Prostate gland (tissue), 2 donors: ENCODE measurements at regions of chr7 and their contacts with region 1.

Region 1: DNA sequence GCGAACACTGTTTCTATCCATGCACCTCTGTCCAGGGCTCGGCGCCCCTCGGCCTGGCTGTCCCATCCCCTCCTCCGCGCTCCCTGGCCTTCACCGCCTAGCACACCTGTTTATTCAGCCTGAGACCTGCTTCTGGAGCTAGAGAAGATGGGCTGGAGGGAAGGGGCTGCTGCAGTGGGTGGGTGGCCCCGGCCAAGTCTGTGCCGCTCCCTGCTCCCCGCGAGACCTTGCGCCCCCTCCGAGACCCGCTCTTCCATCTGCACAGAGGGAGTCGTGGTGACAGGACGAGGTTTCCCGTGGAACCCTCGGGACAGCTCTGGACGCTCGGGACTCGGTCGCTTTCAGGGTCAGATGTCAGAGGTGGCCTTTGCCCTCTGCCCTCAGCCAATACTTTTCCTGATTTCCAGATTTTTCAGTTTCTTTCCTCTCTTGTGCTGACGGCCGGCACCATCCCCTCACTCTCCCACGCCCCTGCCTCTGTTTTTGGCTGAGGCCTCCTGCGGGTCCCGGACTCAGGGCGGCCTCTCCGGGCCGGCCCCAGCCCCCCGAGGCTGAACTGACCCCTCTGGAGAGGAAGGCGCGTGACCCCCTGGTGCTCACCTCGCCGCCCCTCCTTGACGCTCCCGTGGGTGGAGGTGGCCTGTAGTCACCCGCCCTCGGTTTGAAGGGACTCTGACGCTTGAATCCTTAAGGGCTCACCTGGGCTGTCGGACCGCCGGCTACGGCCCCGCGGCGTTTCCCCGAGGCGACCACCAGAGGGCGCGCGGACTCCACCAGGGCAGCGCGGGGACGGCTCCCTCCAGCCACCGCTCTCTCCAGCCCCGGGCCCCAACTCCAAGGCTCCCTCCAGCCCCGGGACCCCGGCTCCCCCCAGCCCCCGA is 15.6 kb downstream of the SHH start:
- DNase-seq: peak; percentile 60
- H3K4me3 ChIP-seq: no peak overlapping the region
- H3K27ac ChIP-seq: no peak overlapping the region
- H3K4me1 ChIP-seq: no peaks in the 10 kb centered on the region
- H3K27me3 ChIP-seq: no peaks in the 10 kb centered on the region
- CTCF ChIP-seq: peak; percentile 62 to 86 (median 82)
- POLR2A ChIP-seq: no peak

Region 2: DNA sequence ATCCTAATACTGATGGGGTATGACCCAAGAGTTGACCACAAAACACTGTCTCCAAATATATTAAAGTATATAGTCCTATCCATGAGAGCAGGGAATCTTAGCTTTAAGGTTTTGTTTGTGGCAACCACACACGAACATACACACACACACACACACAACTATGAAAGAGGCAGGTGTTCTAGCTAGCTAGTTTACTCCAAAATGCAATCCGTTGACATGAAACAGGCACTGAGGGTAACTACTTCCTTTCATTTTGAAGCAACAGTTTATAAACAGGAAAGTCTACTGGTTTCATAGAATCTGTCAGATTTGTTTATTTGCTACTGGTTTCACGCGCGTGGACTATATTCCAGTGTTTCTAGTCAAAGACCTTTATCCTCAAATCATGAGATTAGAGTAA is 711.7 kb before region 1 on chr7:
- intact Hi-C with region 1: no loop called
- DNase-seq: no peak
- H3K4me3 ChIP-seq: no peak overlapping the region
- H3K27ac ChIP-seq: no peak overlapping the region
- H3K4me1 ChIP-seq: no peaks in the 10 kb centered on the region
- H3K27me3 ChIP-seq: no peaks in the 10 kb centered on the region
- CTCF ChIP-seq: no peak
- POLR2A ChIP-seq: no peak

Region 3: GRCh38 chr7:155896531-155897263 is 100.1 kb after region 1 on chr7:
- intact Hi-C with region 1: no loop called
- DNase-seq: no peak
- H3K4me3 ChIP-seq: no peak overlapping the region
- H3K27ac ChIP-seq: no peak overlapping the region
- H3K4me1 ChIP-seq: no peaks in the 10 kb centered on the region
- H3K27me3 ChIP-seq: no peaks in the 10 kb centered on the region
- CTCF ChIP-seq: no peak
- POLR2A ChIP-seq: no peak

Region 4: DNA sequence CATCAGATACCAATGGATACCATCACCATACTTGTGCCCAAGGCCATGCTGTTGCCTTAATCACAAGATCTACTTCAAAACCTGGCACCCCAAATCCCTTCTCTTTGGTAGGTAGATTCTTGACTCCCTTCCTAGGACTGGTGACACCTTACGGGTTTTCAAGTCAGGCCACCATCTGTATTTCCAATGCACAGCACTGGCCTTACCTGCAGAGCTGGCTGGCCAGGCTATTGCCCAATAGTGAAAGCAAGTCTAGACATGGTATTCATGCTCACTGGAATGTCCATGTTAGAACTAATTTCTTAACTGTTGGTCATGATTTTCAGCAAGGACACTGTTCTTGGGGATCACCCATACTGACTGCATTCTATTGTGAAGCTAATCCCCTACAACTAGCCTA is 530.8 kb after region 1 on chr7:
- intact Hi-C with region 1: no loop called
- DNase-seq: peak; percentile 56
- H3K4me3 ChIP-seq: no peak overlapping the region
- H3K27ac ChIP-seq: no peak overlapping the region
- H3K4me1 ChIP-seq: no peaks in the 10 kb centered on the region
- H3K27me3 ChIP-seq: no peaks in the 10 kb centered on the region
- CTCF ChIP-seq: no peak
- POLR2A ChIP-seq: no peak

Region 5: GRCh38 chr7:156816943-156817572 is 1020.4 kb after region 1 on chr7:
- intact Hi-C with region 1: loop called (anchors 5 kb)
- DNase-seq: no peak
- H3K4me3 ChIP-seq: no peak overlapping the region
- H3K27ac ChIP-seq: no peak overlapping the region
- H3K4me1 ChIP-seq: no peaks in the 10 kb centered on the region
- H3K27me3 ChIP-seq: no peaks in the 10 kb centered on the region
- CTCF ChIP-seq: peak in 2 of 4 experiments; percentile 53 to 60
- POLR2A ChIP-seq: no peak